GM18951 (cell line): ENCODE measurements at regions of chr17 and their contacts with region 1.

Region 1: GRCh38 chr17:36212966-36213365 is 2.1 kb downstream of the CCL4L2 start:
- POLR2A ChIP-seq: no peak

Region 2: DNA sequence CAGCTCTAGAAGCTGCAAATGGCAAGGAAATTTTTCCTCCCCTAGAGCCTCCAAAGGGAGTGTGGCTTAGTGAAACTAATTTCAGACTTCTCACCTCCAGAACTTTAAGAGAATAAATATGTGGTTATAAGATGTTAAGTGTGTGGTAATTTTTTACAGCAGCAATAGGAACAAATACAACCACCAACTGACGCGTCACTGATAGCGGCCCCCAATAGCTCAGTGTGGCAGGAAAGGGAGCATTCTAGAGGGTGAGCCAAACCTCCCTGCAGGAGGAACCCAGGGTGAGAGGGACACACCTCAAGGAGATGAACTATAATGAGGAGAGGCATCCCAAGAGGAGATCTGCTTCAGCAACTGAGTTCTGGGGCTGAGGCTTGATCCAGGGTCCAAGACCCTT is 105.3 kb before region 1 on chr17:
- in situ Hi-C with region 1: loop called (anchors 10 kb)
- POLR2A ChIP-seq: no peak